AG04450 (cell line): ENCODE measurements at regions of chr17 and their contacts with region 1.

Region 1: DNA sequence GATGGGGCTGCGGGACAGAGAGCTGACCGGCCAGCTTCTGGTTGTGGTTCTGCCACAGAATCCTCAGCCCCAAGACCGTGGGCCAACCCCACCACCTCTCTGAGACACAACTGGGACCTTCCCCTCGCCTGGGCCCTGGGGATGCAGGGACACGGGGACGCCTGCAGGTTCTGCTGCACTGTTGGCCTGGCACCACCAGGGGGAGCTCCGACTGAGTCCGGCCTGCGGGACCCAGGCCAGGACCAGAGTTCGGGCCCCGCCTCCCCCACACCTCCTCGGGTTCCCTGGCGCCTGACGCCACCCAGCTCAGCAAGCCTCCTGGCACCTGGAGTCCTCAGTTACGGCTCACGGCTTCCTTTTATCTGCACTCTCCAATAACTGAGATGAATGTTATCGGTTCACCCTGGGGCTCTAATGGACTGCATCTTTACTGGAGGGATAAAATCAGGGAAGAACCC is 27.3 kb downstream of the TBC1D16 start:
- DNase-seq: no peak
- H3K4me3 ChIP-seq: no peak overlapping the region
- H3K27ac ChIP-seq: no peak overlapping the region
- H3K27me3 ChIP-seq: no peaks in the 10 kb centered on the region
- CTCF ChIP-seq: peak; percentile 92

Region 2: DNA sequence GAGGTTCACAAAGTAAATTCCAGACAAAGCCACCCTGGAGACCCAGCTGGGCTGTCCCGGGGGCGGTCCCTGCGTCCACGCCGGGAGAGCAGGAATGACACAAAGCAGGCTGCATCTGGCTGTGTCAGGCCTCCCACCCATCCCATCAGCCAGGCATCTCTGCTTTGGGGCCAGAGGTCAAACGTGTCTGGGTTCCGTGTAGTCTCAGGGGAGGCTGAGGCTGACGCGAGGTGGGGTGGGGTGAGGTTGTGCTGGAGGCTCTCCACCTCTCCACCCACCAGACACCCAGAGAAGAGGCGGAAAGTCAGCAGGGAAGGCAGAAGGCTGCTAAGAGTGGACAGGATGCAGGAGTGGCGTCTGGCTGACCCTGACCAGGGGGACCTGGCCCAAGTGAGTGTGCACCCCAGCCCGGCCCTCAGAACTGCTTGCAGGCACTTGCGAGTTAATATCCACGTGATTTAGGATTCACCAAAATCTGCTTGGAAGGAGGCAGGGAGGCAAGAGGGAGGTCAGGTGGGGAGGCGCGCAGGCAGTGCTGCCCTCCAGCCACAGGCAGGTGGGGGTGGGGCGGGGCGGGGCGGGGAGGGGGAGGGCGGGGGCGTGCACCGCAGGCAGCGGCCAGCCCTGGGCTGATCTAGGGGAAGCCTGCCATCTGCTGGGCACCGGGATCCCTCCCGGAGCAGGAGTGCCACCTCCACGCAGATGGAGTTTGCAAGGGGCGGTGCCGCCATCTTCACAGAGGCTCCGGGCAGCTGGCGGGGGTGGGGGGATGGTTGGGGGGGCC is 17.1 kb before region 1 on chr17:
- CTCF ChIA-PET with region 1: interaction called, 73 read pairs
- POLR2A ChIA-PET with region 1: no interaction called
- DNase-seq: peak; percentile 43
- H3K4me3 ChIP-seq: no peak overlapping the region
- H3K27ac ChIP-seq: no peak overlapping the region
- H3K27me3 ChIP-seq: no peaks in the 10 kb centered on the region
- CTCF ChIP-seq: peak; percentile 59

Region 3: GRCh38 chr17:80029258-80029974 is 21.0 kb after region 1 on chr17:
- CTCF ChIA-PET with region 1: interaction called, 45 read pairs
- POLR2A ChIA-PET with region 1: interaction called, 6 read pairs
- DNase-seq: no peak
- H3K4me3 ChIP-seq: peak overlapping the region; percentile 13
- H3K27ac ChIP-seq: peak overlapping the region; percentile 52
- H3K27me3 ChIP-seq: no peaks in the 10 kb centered on the region
- CTCF ChIP-seq: no peak